Dorsolateral prefrontal cortex (tissue), 120 donors: ENCODE measurements at regions of chr9 and their contacts with region 1.

Region 1: DNA sequence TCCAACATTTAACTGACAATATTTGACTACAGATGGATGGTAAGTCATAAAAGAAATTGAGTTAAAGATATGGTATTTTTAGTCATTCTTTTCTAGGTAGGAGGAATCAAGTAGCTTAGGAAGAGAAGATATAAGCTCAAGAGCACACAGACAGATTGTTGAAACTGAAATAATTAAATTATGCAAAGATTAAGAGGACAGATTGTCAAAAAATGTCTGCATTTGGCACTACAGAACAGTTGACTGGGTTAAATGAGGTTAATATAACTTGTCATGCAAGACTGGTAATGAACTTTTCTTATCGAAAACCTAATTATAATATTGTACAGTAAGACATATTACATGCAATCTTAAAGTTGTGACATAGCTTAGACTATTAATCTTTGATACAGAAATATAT is 36.3 kb upstream of the TRPM3 start:
- DNase-seq: no peak
- H3K4me3 ChIP-seq: no peak overlapping the region
- H3K27ac ChIP-seq: no peak overlapping the region
- H3K27me3 ChIP-seq: no peaks in the 10 kb centered on the region
- CTCF ChIP-seq: no peak

Region 2: DNA sequence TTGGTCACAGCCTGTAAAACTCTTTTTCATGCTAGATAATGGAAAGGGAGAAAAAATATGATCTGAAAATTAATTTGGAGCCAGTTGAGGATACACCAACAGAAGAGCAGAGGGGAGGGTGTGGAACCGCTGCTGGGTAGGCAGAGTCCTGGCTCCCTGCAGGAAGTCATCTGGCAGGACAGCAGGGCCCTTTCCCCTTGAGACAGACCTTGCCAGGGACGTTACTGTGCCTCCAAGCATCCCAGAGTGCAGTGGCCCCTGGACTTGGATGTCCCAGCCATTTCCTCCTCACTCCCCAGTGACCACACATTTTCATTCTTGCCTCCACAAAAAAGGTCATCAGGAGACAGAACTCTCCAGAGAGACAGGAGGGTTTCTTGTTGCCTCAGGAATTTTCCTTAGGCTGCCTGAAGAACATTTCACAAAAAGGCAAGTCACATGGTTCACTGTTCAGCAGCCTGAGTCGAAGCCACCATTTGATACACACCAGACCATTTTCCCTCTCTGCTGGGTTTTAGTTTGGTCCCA is 42.2 kb before region 1 on chr9:
- intact Hi-C with region 1: no loop called
- DNase-seq: peak in 3 of 10 donors; percentile 26 to 37 (median 36)
- H3K4me3 ChIP-seq: no peak overlapping the region
- H3K27ac ChIP-seq: peak overlapping the region in 12 of 59 donors; percentile 2 to 58 (median 26)
- H3K27me3 ChIP-seq: peaks cover 0 to 5% (median 0%) of the 10 kb centered on the region in 45 donors
- CTCF ChIP-seq: no peak

Region 3: DNA sequence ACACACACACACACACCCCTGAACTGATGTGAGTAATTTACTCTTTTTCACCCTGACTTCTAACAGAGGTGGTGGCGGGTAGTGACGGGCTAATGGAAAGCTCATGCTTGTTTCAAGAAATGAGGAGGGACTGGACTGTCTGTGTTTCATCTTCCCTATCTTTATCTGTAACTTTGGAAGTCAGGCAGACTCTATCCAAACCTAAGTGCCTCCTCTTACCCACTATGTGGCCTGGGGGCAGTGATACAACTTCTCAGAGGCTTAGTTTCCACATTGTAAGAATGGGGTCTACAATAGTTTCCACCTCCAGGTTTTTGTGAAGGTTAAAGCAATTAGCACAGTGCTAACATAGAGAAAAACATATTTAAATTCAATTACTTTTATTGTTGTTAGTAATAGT is 30.4 kb before region 1 on chr9:
- intact Hi-C with region 1: loop called in 1 of 2 experiments (anchors 2 kb)
- DNase-seq: no peak
- H3K4me3 ChIP-seq: no peak overlapping the region
- H3K27ac ChIP-seq: no peak overlapping the region
- H3K27me3 ChIP-seq: peaks cover 0 to 22% (median 0%) of the 10 kb centered on the region in 45 donors
- CTCF ChIP-seq: no peak

Region 4: GRCh38 chr9:71210326-71210725 is 52.6 kb after region 1 on chr9:
- intact Hi-C with region 1: no loop called
- DNase-seq: no peak
- H3K4me3 ChIP-seq: no peak overlapping the region
- H3K27ac ChIP-seq: no peak overlapping the region
- H3K27me3 ChIP-seq: no peaks in the 10 kb centered on the region
- CTCF ChIP-seq: no peak